Right lobe of liver (tissue), 6 donors: ENCODE measurements at regions of chr6 and their contacts with region 1.

Region 1: GRCh38 chr6:36765594-36766398 is 68.2 kb downstream of the RAB44 start:
- DNase-seq: peak; percentile 83 to 84 (median 83)
- ATAC-seq: peak; percentile 89 to 95 (median 92)
- H3K4me3 ChIP-seq: no peak overlapping the region
- H3K27ac ChIP-seq: no peak overlapping the region
- H3K4me1 ChIP-seq: no peaks in the 10 kb centered on the region
- H3K27me3 ChIP-seq: no peaks in the 10 kb centered on the region
- CTCF ChIP-seq: peak; percentile 70 to 91 (median 82)
- POLR2A ChIP-seq: no peak

Region 2: GRCh38 chr6:36839749-36840431 is 74.1 kb after region 1 on chr6:
- intact Hi-C with region 1: loop called (anchors 5 to 10 kb)
- DNase-seq: peak in 1 of 3 donors; percentile 48
- ATAC-seq: peak; percentile 27 to 62 (median 50)
- H3K4me3 ChIP-seq: peak overlapping the region; percentile 16 to 46 (median 28)
- H3K27ac ChIP-seq: no peak overlapping the region
- H3K4me1 ChIP-seq: peaks cover 0 to 10% (median 0%) of the 10 kb centered on the region in 4 donors
- H3K27me3 ChIP-seq: no peaks in the 10 kb centered on the region
- CTCF ChIP-seq: peak in 1 of 4 donors; percentile 18
- POLR2A ChIP-seq: no peak

Region 3: GRCh38 chr6:36955671-36956445 is 190.1 kb after region 1 on chr6:
- intact Hi-C with region 1: no loop called
- DNase-seq: peak in 1 of 3 donors; percentile 31
- ATAC-seq: no peak
- H3K4me3 ChIP-seq: no peak overlapping the region
- H3K27ac ChIP-seq: no peak overlapping the region
- H3K4me1 ChIP-seq: no peaks in the 10 kb centered on the region
- H3K27me3 ChIP-seq: no peaks in the 10 kb centered on the region
- CTCF ChIP-seq: no peak
- POLR2A ChIP-seq: no peak

Region 4: DNA sequence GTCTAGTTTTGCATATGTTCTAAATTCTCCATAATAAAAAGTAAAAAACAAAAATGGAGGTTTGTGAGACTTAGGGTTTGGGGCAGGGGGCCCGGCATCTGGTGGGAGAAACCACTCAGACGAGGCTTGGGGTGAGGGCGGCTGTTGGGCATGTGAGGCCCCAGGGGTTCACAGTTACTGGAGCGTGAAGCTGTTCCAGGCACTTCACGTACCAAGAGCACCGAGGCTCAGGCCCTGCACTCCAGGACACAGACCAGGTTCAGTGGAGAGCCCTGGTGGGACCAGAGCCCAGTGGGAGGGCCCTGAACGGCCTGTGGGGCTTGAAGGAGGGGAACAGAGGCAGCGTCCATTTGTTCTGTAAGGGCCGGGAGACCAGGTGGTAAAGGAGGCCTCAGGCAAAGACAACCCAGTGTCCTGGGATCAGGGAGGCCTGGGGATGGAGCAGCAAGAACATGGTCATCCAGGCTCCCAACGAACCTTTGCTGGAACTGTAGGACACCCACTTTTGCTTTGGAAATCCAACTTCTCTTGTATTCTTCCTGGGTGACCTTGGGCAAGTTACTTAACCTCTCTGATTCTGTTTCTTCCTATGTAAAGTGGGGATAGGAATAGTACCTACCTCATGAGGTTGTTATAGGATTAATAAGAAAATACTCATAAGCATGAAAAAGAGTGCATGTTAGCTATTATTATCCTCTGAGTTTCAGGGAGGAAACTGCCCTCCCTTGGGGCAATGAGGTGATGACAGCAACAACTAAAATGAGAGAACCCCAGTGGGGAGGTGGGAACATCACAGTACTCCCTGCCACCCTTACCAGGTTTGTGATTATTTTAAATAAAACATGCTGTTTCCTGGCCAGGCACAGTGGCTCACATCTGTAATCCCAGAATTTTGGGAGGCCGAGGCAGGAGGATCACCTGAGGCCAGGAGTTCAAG is 238.5 kb after region 1 on chr6:
- intact Hi-C with region 1: no loop called
- DNase-seq: no peak
- ATAC-seq: no peak
- H3K4me3 ChIP-seq: no peak overlapping the region
- H3K27ac ChIP-seq: no peak overlapping the region
- H3K4me1 ChIP-seq: no peaks in the 10 kb centered on the region
- H3K27me3 ChIP-seq: no peaks in the 10 kb centered on the region
- CTCF ChIP-seq: no peak
- POLR2A ChIP-seq: no peak

Region 5: GRCh38 chr6:37018198-37019064 is 252.6 kb after region 1 on chr6:
- intact Hi-C with region 1: loop called (anchors 10 kb)
- DNase-seq: peak; percentile 88 to 90 (median 89)
- ATAC-seq: peak; percentile 86 to 90 (median 87)
- H3K4me3 ChIP-seq: no peak overlapping the region
- H3K27ac ChIP-seq: peak overlapping the region; percentile 41 to 68 (median 57)
- H3K4me1 ChIP-seq: peaks cover 0 to 36% (median 13%) of the 10 kb centered on the region in 4 donors
- H3K27me3 ChIP-seq: no peaks in the 10 kb centered on the region
- CTCF ChIP-seq: peak; percentile 66 to 88 (median 76)
- POLR2A ChIP-seq: no peak